ENCODE measurements at regions of chr11 and their contacts with region 1.

Region 1: GRCh38 chr11:64990222-64990923 is 6.4 kb downstream of the BATF2 start:
- DNase-seq: peak; percentile 60 to 75 (median 73)
- ATAC-seq: peak; percentile 49 to 91 (median 85)
- H3K4me3 ChIP-seq: peak overlapping the region in 9 of 12 donors; percentile 29 to 46 (median 36)
- H3K27ac ChIP-seq: peak overlapping the region in 11 of 12 donors; percentile 54 to 85 (median 72)
- H3K4me1 ChIP-seq: peaks cover 0 to 74% (median 21%) of the 10 kb centered on the region in 12 donors
- H3K27me3 ChIP-seq: no peaks in the 10 kb centered on the region
- CTCF ChIP-seq: no peak
- POLR2A ChIP-seq: no peak

Region 2: GRCh38 chr11:64644647-64645275 is 345.6 kb before region 1 on chr11:
- intact Hi-C with region 1: no loop called
- DNase-seq: no peak
- ATAC-seq: no peak
- H3K4me3 ChIP-seq: no peak overlapping the region
- H3K27ac ChIP-seq: no peak overlapping the region
- H3K4me1 ChIP-seq: peaks cover 0 to 18% (median 0%) of the 10 kb centered on the region in 12 donors
- H3K27me3 ChIP-seq: peaks cover 12 to 56% (median 30%) of the 10 kb centered on the region in 9 donors
- CTCF ChIP-seq: peak in 1 of 12 donors; percentile 6
- POLR2A ChIP-seq: no peak

Region 3: GRCh38 chr11:64762674-64763525 is 227.5 kb before region 1 on chr11:
- intact Hi-C with region 1: no loop called
- DNase-seq: peak in 1 of 5 donors; percentile 70
- ATAC-seq: peak in 3 of 4 donors; percentile 4 to 27 (median 9)
- H3K4me3 ChIP-seq: no peak overlapping the region
- H3K27ac ChIP-seq: peak overlapping the region; percentile 3 to 82 (median 73)
- H3K4me1 ChIP-seq: peaks cover 11 to 80% (median 55%) of the 10 kb centered on the region in 12 donors
- H3K27me3 ChIP-seq: no peaks in the 10 kb centered on the region
- CTCF ChIP-seq: no peak
- POLR2A ChIP-seq: no peak

Region 4: DNA sequence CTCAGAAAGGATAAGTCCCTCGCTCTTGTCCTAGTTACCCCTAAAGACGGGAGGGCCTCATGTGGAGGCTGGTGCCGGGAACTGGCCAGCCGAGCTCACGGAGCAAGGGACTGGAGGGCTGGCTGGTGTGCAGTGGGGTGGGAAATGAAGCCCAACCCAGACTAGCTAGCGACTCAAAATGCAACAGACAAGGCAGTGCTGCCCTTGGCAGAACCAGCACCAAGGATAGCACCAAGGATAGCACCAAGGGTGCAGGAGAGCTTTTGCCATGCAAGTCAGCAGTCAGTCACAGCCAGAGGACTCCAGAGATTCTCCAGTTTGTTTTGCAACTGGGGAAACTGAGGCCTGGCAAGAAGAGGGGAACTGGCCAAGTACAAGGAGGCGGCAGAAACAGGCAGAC is 12.9 kb after region 1 on chr11:
- intact Hi-C with region 1: loop called in 1 of 10 experiments (anchors 2 kb)
- DNase-seq: no peak
- ATAC-seq: no peak
- H3K4me3 ChIP-seq: no peak overlapping the region
- H3K27ac ChIP-seq: no peak overlapping the region
- H3K4me1 ChIP-seq: peaks cover 0 to 11% (median 0%) of the 10 kb centered on the region in 12 donors
- H3K27me3 ChIP-seq: no peaks in the 10 kb centered on the region
- CTCF ChIP-seq: no peak
- POLR2A ChIP-seq: no peak

Region 5: DNA sequence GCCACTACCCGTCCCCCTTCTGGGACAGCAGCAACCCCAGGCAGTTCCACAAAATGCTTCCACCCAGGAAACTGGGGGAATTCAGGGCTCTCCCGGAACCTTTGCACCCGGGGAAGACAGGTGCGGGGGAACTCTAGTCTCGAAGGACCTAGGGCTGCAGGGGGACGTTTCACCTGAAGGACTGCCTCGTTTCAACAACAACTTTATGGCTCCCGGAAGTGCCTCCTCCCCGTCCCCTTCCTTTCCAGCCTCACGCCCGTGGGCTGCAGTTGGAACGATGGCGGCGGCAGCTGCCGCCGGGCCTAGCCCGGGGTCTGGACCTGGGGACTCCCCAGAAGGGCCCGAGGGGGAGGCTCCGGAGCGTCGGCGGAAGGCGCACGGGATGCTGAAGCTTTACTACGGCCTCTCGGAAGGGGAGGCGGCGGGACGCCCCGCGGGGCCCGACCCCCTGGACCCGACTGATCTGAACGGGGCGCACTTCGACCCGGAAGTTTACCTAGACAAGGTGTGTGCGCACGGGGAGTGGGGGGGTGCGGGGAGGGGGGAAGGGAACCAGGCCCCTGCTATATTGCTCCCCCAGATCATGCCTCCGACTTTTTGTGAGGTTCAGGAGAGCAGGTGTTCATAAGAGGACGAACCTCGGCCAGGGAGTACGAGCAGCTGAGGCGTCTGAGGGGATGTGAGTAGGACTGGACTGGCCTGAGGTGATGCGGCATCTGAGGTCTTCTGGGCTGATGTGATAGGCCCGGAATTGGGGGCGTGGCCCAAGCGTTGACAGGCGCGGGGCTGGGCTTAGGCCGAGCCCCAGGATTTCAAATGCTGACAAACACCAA is 105.8 kb after region 1 on chr11 and contains the start of gene VPS51:
- intact Hi-C with region 1: no loop called
- DNase-seq: peak; percentile 88 to 92 (median 90)
- ATAC-seq: peak; percentile 92 to 96 (median 95)
- H3K4me3 ChIP-seq: peak within 1 kb of the TSS; percentile 59 to 91 (median 85)
- H3K27ac ChIP-seq: peak within 1 kb of the TSS; percentile 52 to 96 (median 92)
- H3K4me1 ChIP-seq: peaks cover 0 to 25% (median 15%) of the 10 kb centered on the region in 12 donors
- H3K27me3 ChIP-seq: no peaks in the 10 kb centered on the region
- CTCF ChIP-seq: no peak
- POLR2A ChIP-seq: peak in 1 of 2 donors; percentile 47
- total RNA-seq, gene VPS51: 78.4 to 165 (median 106) TPM

Region 6: GRCh38 chr11:65261591-65262380 is 271.4 kb after region 1 on chr11 and contains the start of gene POLA2:
- intact Hi-C with region 1: no loop called
- DNase-seq: peak; percentile 95 to 98 (median 95)
- ATAC-seq: peak; percentile 93 to 98 (median 96)
- H3K4me3 ChIP-seq: peak within 1 kb of the TSS; percentile 57 to 85 (median 76)
- H3K27ac ChIP-seq: peak within 1 kb of the TSS; percentile 71 to 96 (median 92)
- H3K4me1 ChIP-seq: peaks cover 0 to 21% (median 11%) of the 10 kb centered on the region in 12 donors
- H3K27me3 ChIP-seq: no peaks in the 10 kb centered on the region
- CTCF ChIP-seq: no peak
- POLR2A ChIP-seq: peak; percentile 69 to 89
- total RNA-seq, gene POLA2: 3.2 to 9.0 (median 4.2) TPM

Measured in heart left ventricle (tissue), 16 donors.